Sciatic nerve (tissue), 2 donors: ENCODE measurements at regions of chr12 and their contacts with region 1.

Region 1: GRCh38 chr12:62435303-62436163 is 31.1 kb upstream of the MON2 start:
- DNase-seq: peak; percentile 65
- ATAC-seq: peak; percentile 80

Region 2: GRCh38 chr12:62260733-62261683 is 174.5 kb before region 1 on chr12:
- intact Hi-C with region 1: no loop called
- DNase-seq: no peak
- ATAC-seq: peak; percentile 59

Region 3: GRCh38 chr12:62802984-62803383 is 367.5 kb after region 1 on chr12:
- intact Hi-C with region 1: loop called (anchors 10 kb)
- DNase-seq: no peak
- ATAC-seq: no peak

Region 4: DNA sequence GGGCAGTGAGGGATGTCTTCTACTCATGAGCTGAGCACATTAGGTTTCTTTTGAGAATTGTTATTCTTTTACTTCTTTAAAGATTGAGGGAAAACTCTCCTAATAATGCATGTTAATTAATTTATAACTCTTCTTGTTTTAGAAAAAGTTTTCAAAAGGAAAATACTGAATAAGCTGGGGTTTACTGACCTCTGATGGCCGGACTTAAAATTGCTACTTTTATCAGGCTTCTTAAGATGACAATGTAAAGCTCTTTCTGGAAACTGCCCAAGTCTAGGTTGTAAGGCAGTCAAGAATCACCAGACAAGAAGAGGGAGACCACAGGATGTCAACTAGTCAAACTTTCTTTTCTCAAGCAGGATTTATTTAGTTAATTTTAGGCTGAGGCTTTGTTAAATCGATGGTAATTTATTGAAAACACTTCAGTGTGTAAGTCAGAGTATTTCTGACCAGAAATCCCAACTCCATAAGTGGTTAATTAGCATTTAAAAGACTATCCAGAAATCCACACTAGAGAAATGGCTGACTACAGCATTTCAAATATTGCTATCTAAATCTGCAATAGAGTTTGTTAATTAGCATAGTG is 633.4 kb after region 1 on chr12:
- intact Hi-C with region 1: loop called (anchors 5 kb)
- DNase-seq: no peak
- ATAC-seq: no peak